ENCODE measurements at regions of chr1 and their contacts with region 1.

Region 1: GRCh38 chr1:15760520-15761211 is 2.1 kb downstream of the FBLIM1 start:
- DNase-seq: peak; percentile 86
- H3K4me3 ChIP-seq: peak overlapping the region; percentile 92 to 99 (median 97)
- H3K27ac ChIP-seq: peak overlapping the region; percentile 81
- H3K4me1 ChIP-seq: peaks cover 62% of the 10 kb centered on the region
- H3K27me3 ChIP-seq: no peaks in the 10 kb centered on the region
- CTCF ChIP-seq: no peak
- POLR2A ChIP-seq: peak; percentile 78

Region 2: DNA sequence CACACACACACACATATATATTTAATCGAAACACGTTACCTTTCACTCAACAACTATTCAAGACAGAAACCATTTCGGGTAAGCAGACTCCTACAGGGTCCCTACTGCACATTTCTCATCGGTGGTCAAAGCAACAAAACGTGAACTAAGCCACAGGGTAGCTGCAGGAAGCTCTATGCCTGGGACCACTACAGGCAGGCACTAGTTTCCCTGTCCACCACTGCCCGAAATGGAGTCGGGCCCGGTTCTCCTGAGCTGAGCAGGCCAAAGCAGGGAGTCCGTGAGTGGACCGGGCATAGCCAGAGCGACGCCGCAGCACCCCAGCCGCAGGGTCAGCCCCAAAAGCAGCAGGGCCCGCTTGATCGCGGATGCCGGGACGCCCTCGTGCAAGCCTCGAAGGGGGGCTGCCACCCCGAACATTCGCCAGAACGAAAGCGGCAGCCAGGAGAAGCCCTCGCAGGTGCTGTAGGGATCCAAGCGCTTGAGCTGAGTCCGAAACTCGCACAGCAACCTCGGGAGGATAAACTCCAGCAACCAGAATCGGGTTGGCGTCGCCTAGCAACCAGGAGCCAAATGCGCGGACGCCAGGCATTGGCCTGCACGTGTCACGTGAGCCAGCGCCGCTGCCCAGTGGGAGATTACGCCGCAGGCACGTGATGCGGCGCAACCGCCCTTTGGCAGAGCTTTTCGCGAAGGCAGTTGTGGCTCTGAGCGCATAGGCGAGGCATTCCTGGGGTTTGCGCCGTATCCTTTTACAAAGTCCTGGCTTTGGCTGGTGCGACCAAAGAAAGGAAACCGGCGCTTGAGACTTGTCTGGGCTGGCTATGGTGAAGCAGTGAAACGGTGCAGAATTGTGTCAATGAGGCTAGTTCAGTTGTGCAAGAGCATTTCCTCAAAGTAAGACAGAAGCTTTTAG is 157.4 kb before region 1 on chr1:
- CTCF ChIA-PET with region 1: no interaction called
- POLR2A ChIA-PET with region 1: no interaction called
- dilution Hi-C with region 1: no loop called
- intact Hi-C with region 1: loop called (anchors 5 kb)
- DNase-seq: peak; percentile 95
- H3K4me3 ChIP-seq: peak overlapping the region; percentile 34 to 54 (median 54)
- H3K27ac ChIP-seq: no peak overlapping the region
- H3K4me1 ChIP-seq: peaks cover 8% of the 10 kb centered on the region
- H3K27me3 ChIP-seq: peaks cover 2% of the 10 kb centered on the region in 2 experiments
- CTCF ChIP-seq: no peak
- POLR2A ChIP-seq: peak; percentile 83

Region 3: DNA sequence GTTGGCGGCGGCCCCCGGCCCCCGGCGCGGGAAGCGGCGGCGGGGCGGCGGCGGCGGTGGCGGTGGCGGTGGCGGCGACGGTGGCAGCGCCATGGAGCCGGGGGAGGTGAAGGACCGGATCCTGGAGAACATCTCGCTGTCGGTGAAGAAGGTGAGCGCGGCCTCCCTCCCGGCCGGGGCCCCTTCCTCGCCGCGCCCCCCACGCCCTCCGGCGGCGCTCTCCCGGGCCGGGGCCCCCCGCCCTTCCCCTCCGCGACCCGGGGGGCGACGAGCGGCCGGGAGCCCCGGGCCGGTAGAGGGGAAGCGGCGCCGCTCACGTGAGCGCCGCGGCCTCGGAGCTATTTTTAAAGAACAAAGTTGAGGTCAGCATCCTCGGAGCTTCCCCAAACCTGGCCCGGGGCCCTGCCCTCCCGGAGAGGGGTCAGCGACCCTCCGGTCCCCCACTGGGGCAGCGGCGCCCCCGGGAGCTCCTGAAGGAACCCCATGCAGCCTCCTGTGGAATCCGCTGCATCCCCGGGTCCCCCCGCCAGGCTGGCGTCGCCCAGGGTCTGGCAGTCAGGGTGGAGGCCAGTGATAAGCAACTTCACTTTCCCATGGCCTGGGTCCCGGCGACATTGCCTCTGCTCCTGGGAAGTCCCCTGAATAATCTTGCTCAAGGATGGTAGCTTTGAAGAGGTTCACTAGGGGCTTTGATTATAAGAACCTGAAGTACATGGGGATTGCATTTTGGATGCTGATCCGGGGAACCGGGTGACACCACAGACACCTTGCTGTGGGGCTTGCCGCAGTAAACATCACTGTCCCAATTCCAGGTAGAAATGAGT is 76.0 kb before region 1 on chr1:
- CTCF ChIA-PET with region 1: no interaction called
- POLR2A ChIA-PET with region 1: no interaction called
- dilution Hi-C with region 1: no loop called
- intact Hi-C with region 1: loop called (anchors 2 kb)
- DNase-seq: peak; percentile 47
- H3K4me3 ChIP-seq: peak overlapping the region; percentile 61 to 87 (median 73)
- H3K27ac ChIP-seq: peak overlapping the region; percentile 70
- H3K4me1 ChIP-seq: peaks cover 7% of the 10 kb centered on the region
- H3K27me3 ChIP-seq: no peaks in the 10 kb centered on the region
- CTCF ChIP-seq: peak in 1 of 2 donors; percentile 8
- POLR2A ChIP-seq: no peak

Region 4: GRCh38 chr1:15749399-15750291 is 11.0 kb before region 1 on chr1:
- CTCF ChIA-PET with region 1: interaction called, 17 read pairs
- POLR2A ChIA-PET with region 1: interaction called, 26 read pairs
- dilution Hi-C with region 1: no loop called
- intact Hi-C with region 1: loop called (anchors 1 kb)
- DNase-seq: peak; percentile 92
- H3K4me3 ChIP-seq: peak overlapping the region in 2 of 3 experiments; percentile 26 to 74
- H3K27ac ChIP-seq: peak overlapping the region; percentile 97
- H3K4me1 ChIP-seq: peaks cover 35% of the 10 kb centered on the region
- H3K27me3 ChIP-seq: no peaks in the 10 kb centered on the region
- CTCF ChIP-seq: no peak
- POLR2A ChIP-seq: peak; percentile 63

Region 5: DNA sequence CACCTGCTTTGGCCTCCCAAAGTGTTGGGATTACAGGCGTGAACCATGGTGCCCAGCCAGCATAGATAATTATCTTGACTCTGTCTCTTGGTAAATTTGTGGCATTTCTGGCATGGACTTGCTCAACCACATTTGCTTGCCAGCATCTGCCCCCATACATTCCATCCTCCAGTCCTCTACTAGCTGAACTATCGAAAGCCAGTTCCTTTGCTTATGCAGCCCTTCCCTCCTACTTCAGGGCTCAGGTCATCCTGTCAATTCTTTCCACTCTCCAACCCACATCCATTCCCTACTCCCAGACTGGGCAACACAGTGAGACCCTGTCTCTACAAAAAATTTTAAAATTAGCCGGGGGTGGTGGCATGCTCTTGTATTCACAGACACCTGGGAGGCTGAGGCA is 59.8 kb after region 1 on chr1:
- CTCF ChIA-PET with region 1: no interaction called
- POLR2A ChIA-PET with region 1: no interaction called
- dilution Hi-C with region 1: no loop called
- intact Hi-C with region 1: no loop called
- DNase-seq: no peak
- H3K4me3 ChIP-seq: no peak overlapping the region
- H3K27ac ChIP-seq: no peak overlapping the region
- H3K4me1 ChIP-seq: no peaks in the 10 kb centered on the region
- H3K27me3 ChIP-seq: no peaks in the 10 kb centered on the region
- CTCF ChIP-seq: no peak
- POLR2A ChIP-seq: no peak

Region 6: DNA sequence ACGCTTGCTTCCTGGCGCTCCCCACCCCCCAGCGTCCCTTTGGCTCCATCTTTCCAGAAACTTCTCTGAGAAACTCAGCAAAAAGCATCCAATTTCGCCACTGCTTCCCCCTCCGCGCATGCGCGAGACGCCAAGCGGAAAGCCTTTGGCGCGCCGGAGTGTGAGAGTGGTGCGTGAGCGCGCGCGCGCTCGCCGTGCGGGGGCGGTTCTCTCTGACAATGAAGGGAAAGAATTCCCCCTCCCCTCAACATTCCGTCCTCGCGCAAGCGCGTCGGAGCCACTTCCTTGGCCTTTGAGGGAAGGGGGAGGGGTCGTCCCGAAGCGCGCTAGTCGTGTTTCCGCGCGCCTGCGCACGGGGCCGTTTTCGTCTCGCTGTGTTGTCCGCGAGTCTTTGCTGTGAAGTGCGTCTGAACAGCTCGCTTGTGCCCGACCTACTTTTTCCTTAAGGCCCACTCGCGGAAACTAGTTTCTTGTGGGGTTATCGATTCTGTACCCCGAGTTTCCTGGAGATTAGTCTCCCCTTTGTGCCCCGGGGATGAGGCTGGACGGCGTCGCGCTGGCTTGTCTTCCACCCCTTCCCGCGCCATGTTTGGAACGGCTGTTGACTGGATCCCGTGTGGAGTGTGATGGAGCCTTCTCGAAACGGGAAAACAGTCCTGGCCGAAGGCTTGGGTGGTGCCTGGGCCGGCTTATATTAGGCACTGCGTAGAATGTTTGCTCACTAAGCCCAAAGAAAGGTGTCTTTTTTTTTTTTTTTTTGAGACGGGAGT is 75.3 kb after region 1 on chr1:
- CTCF ChIA-PET with region 1: no interaction called
- POLR2A ChIA-PET with region 1: no interaction called
- dilution Hi-C with region 1: no loop called
- intact Hi-C with region 1: loop called (anchors 2 kb)
- DNase-seq: peak; percentile 100
- H3K4me3 ChIP-seq: peak overlapping the region in 2 of 3 experiments; percentile 58 to 66
- H3K27ac ChIP-seq: peak overlapping the region; percentile 95
- H3K4me1 ChIP-seq: peaks cover 3% of the 10 kb centered on the region
- H3K27me3 ChIP-seq: no peaks in the 10 kb centered on the region
- CTCF ChIP-seq: no peak
- POLR2A ChIP-seq: peak; percentile 85